ENCODE measurements at regions of chrX and their contacts with region 1.

Region 1: GRCh38 chrX:74540605-74541249 is 73.7 kb downstream of the RLIM start:
- DNase-seq: no peak
- H3K4me3 ChIP-seq: no peak overlapping the region
- H3K27ac ChIP-seq: no peak overlapping the region
- H3K4me1 ChIP-seq: no peaks in the 10 kb centered on the region
- H3K27me3 ChIP-seq: peaks cover 4% of the 10 kb centered on the region
- CTCF ChIP-seq: no peak
- POLR2A ChIP-seq: no peak

Region 2: GRCh38 chrX:74382613-74383012 is 158.1 kb before region 1 on chrX:
- intact Hi-C with region 1: loop called in 1 of 2 experiments (anchors 10 kb)
- DNase-seq: peak; percentile 60 to 88 (median 73)
- H3K4me3 ChIP-seq: no peak overlapping the region
- H3K27ac ChIP-seq: peak overlapping the region in 1 of 5 donors; percentile 44
- H3K4me1 ChIP-seq: no peaks in the 10 kb centered on the region
- H3K27me3 ChIP-seq: peaks cover 3% of the 10 kb centered on the region
- CTCF ChIP-seq: peak; percentile 60 to 77 (median 70)
- POLR2A ChIP-seq: no peak

Region 3: GRCh38 chrX:74506317-74507115 is 34.2 kb before region 1 on chrX:
- intact Hi-C with region 1: no loop called
- DNase-seq: no peak
- H3K4me3 ChIP-seq: no peak overlapping the region
- H3K27ac ChIP-seq: no peak overlapping the region
- H3K4me1 ChIP-seq: no peaks in the 10 kb centered on the region
- H3K27me3 ChIP-seq: peaks cover 3% of the 10 kb centered on the region
- CTCF ChIP-seq: no peak
- POLR2A ChIP-seq: no peak

Measured in adrenal gland (tissue), 19 donors.